AG04450 (cell line): ENCODE measurements at regions of chr13 and their contacts with region 1.

Region 1: GRCh38 chr13:46553886-46554858 is 1.2 kb downstream of the LRCH1 start:
- DNase-seq: no peak
- H3K4me3 ChIP-seq: peak overlapping the region; percentile 92
- H3K27ac ChIP-seq: peak overlapping the region; percentile 94
- H3K27me3 ChIP-seq: no peaks in the 10 kb centered on the region
- CTCF ChIP-seq: peak; percentile 16; the same call in 1 of the 2 replicates

Region 2: GRCh38 chr13:46541210-46541609 is 13.0 kb before region 1 on chr13:
- CTCF ChIA-PET with region 1: interaction called, 10 read pairs
- POLR2A ChIA-PET with region 1: no interaction called
- DNase-seq: no peak
- H3K4me3 ChIP-seq: no peak overlapping the region
- H3K27ac ChIP-seq: no peak overlapping the region
- H3K27me3 ChIP-seq: peaks cover 4% of the 10 kb centered on the region
- CTCF ChIP-seq: no peak

Region 3: DNA sequence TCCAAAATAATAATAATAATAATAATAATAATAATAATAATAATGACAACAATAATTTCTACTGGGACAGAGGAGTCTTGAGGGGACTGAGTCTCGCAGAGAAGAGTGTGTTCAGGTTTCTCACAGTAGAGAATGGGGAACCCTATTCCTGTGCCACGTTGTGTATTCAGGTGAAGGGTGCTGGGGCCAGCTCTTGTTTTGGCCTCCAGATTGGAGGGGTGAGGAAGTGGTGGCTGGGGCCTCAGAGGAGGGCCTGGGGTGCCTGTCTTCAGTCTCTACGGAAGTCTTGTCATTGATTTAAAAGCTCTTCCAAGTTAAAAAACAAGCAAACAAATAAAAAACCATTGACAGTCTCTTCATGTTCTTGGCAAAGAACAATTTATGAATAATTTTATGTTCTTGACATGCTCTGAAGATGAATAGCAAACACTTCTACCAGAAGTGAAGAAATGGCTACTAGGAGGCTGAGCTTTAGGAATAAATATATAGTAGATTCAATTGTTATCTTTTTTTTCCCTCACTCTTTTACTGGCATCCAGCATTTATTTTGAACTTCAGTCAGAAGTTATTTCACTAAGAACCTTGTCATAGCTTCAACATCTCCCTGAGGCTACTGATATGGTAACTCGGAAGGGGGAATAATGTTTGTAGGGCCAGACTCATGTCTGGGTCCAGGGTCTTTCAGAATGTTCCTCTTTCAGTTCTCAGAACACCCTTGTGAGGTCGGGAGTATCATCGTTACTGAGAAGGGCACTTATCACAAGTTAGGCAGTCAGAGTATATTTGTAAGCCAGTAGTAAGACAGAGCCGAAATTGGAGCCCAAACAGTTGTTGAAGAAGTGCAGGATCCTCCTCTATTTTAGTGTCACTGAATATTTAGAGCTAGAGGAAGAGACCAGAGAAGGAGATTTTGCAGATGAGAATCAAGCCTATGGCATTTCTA is 11.9 kb after region 1 on chr13:
- CTCF ChIA-PET with region 1: interaction called, 20 read pairs
- POLR2A ChIA-PET with region 1: no interaction called
- DNase-seq: no peak
- H3K4me3 ChIP-seq: no peak overlapping the region
- H3K27ac ChIP-seq: no peak overlapping the region
- H3K27me3 ChIP-seq: no peaks in the 10 kb centered on the region
- CTCF ChIP-seq: no peak

Region 4: GRCh38 chr13:46575301-46575771 is 21.2 kb after region 1 on chr13:
- CTCF ChIA-PET with region 1: interaction called, 14 read pairs
- POLR2A ChIA-PET with region 1: interaction called, 3 read pairs
- DNase-seq: peak; percentile 46
- H3K4me3 ChIP-seq: no peak overlapping the region
- H3K27ac ChIP-seq: peak overlapping the region; percentile 22
- H3K27me3 ChIP-seq: no peaks in the 10 kb centered on the region
- CTCF ChIP-seq: no peak

Region 5: DNA sequence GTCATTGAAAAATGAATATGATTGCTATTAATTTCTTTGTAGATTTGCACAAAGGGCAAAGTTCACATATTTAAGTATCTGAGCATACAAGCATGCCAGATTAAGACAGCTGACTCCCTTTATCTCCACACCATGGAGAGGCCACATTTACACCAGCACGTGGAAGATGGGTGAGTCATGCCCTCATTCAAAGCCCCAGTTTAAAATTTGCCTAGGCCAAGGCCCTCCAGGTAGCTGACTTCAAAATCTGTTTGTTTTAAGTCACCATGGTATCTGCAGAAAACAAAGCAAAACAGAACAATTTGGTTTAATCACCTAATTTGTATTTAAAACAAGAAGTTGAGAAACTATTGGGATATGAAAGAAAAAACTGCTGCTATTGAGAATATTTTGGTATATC is 133.6 kb after region 1 on chr13:
- CTCF ChIA-PET with region 1: interaction called, 14 read pairs
- POLR2A ChIA-PET with region 1: no interaction called
- DNase-seq: no peak
- H3K4me3 ChIP-seq: no peak overlapping the region
- H3K27ac ChIP-seq: no peak overlapping the region
- H3K27me3 ChIP-seq: no peaks in the 10 kb centered on the region
- CTCF ChIP-seq: no peak

Region 6: DNA sequence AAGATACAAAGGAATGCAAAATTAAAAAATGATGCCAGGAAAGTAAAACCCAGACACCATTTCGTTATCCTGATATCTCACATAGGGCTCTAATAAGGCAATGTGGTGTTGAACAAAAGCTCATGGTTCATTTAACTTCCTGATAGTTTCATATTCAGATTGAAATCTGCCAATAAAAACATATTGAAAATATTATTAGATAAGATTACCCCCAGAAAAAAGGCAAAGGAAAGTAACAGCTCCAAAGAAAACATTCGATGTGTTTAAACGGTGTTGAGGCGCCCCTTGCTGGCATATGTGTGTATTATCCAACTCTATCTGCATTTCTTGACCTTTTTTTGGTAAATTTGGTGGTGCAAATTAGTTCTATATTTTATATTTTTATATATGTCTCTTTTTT is 166.9 kb after region 1 on chr13:
- CTCF ChIA-PET with region 1: interaction called, 106 read pairs
- POLR2A ChIA-PET with region 1: no interaction called
- DNase-seq: peak; percentile 16
- H3K4me3 ChIP-seq: no peak overlapping the region
- H3K27ac ChIP-seq: no peak overlapping the region
- H3K27me3 ChIP-seq: no peaks in the 10 kb centered on the region
- CTCF ChIP-seq: peak; percentile 66

Region 7: DNA sequence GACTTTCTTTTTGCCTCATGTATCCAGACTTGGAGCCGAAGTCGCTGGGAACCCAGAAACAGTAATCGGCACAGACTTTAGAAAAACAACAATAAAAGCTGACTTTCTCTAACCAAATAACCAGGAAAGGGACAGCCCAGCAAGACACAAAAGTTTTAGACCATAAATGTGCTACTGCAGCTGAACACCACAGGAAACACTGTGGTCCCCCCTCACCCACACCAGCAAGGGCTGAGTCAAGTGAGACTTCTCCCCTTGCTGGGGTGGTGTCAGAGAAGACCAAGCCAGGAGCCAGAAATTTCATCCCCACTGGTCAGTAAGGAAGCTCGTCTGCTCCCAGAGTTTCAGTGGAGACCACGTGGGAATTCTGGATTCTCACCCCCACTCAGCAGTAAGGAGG is 172.2 kb after region 1 on chr13:
- CTCF ChIA-PET with region 1: interaction called, 106 read pairs
- POLR2A ChIA-PET with region 1: no interaction called
- DNase-seq: no peak
- H3K4me3 ChIP-seq: no peak overlapping the region
- H3K27ac ChIP-seq: no peak overlapping the region
- H3K27me3 ChIP-seq: no peaks in the 10 kb centered on the region
- CTCF ChIP-seq: no peak